Heart right ventricle (tissue), 16 donors: ENCODE measurements at regions of chr1 and their contacts with region 1.

Region 1: DNA sequence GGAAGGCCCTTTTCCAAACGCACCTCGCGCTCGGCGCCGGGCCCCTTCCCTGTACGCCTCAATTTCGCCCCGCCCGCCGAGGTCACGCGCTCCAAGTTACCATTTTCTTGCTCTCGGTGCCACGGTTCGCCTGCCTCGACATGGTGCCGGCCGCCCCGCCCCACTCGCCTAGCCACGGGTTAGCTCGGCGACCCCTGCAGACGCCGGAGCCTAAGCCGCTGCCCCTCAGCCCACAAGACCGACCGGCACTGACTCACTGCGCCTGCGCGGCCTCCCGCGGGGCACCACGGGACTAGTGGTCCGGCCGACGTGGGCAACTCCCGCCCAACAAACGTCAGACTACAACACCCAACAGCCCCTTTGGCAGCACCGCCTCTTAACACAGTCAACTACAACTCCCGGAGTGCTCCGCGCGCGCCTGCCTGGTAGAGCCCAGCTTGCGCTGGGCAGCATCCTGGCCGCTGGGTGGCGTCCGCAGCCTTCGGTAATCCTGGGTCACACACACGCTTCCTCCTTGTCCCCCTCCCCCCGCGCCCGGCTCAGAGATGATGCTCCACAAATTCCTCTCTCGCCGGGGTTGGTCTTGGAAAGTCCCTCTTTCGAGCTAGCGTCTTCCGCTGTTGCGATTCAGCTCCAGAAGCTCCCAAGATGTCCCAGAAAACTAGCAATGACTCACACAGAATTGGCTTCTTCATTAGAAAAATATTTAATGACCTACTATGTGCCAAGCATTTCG is at the start of gene TRAPPC3:
- DNase-seq: peak; percentile 100
- ATAC-seq: peak; percentile 92 to 97 (median 94)
- H3K4me3 ChIP-seq: peak within 1 kb of the TSS; percentile 59 to 87 (median 78)
- H3K27ac ChIP-seq: peak within 1 kb of the TSS; percentile 84 to 100 (median 94)
- H3K4me1 ChIP-seq: peaks cover 18 to 63% (median 50%) of the 10 kb centered on the region in 9 donors
- H3K27me3 ChIP-seq: no peaks in the 10 kb centered on the region
- CTCF ChIP-seq: peak; percentile 84 to 100 (median 97)
- total RNA-seq, gene TRAPPC3: 41.6 to 62.6 (median 48.4) TPM

Region 2: DNA sequence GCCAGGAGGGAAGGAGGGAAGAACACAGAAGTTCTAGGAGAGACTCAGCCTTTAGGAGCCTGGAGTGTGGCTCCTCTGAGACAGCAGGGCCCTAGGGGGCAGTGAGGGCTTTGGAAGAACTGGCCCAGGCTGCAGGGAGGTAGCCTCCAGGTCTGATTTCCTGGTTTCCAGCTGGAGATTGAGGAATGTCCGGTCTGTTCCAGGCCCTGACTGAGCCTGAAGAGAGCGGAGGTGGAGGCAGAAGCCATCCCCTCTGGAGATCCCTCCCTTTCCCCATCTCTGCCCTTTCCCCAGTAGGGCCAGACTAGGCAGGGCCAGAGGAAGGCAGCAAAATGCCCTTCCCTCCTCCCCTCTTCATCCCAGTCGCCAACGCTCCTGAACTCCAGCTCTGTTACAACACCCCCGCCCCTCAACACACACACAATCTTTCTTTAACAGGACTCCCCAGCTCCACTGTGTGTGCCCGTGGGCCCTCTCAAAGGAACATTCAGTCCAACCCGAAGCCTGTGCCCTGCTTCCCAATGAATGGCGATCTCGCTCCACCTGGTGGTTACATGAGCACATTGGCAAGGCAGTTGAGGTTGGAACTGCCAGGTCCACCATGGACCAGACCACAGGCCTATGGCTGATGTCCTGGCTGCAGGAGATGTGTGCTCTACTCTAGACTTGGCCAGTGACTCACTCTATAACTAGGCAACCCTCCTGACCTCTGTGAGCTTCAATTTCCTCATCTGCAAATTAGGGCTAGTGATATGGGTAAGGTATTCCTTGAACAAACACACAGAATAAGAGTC is 38.6 kb after region 1 on chr1:
- intact Hi-C with region 1: loop called (anchors 1 to 5 kb)
- DNase-seq: peak; percentile 76 to 90
- ATAC-seq: peak; percentile 91 to 97 (median 96)
- H3K4me3 ChIP-seq: peak overlapping the region in 2 of 10 donors; percentile 9 to 19
- H3K27ac ChIP-seq: peak overlapping the region; percentile 68 to 93 (median 83)
- H3K4me1 ChIP-seq: peaks cover 0 to 24% (median 10%) of the 10 kb centered on the region in 9 donors
- H3K27me3 ChIP-seq: no peaks in the 10 kb centered on the region
- CTCF ChIP-seq: peak; percentile 67 to 94 (median 86)

Region 3: DNA sequence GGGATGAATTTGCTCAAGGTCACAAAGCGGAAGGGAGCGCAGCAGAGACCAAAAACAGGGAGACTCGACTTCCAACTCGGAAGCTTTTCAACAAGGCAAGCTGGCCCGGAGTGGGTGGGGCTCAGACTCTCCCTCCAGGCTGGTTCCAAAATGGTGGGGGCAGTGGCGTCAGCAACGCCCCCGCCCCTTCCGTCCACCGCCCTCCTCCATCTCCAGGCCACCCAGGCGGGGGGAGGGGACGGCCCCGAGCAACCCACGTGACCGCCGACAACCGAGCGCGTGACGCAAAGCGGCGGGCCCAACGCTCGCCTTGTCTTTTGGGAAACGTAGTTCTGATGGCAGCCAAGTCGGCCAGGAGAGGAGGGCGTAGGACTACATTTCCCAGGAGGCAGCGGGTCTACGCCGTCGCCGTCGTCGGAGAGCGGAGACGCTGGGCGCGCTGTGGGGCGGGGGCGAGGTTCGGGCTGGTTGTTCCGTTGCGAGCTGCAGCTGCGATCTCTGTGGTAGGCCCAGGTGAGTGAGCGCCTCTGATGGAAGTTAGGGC is 74.7 kb after region 1 on chr1 and contains the start of gene THRAP3:
- intact Hi-C with region 1: loop called in 6 of 10 experiments (anchors 1 to 5 kb)
- DNase-seq: peak; percentile 99
- ATAC-seq: peak; percentile 96 to 98 (median 97)
- H3K4me3 ChIP-seq: peak within 1 kb of the TSS; percentile 63 to 88 (median 79)
- H3K27ac ChIP-seq: peak within 1 kb of the TSS; percentile 93 to 99 (median 96)
- H3K4me1 ChIP-seq: peaks cover 3 to 53% (median 45%) of the 10 kb centered on the region in 9 donors
- H3K27me3 ChIP-seq: no peaks in the 10 kb centered on the region
- CTCF ChIP-seq: no peak
- total RNA-seq, gene THRAP3: 85.3 to 109 (median 100) TPM

Region 4: DNA sequence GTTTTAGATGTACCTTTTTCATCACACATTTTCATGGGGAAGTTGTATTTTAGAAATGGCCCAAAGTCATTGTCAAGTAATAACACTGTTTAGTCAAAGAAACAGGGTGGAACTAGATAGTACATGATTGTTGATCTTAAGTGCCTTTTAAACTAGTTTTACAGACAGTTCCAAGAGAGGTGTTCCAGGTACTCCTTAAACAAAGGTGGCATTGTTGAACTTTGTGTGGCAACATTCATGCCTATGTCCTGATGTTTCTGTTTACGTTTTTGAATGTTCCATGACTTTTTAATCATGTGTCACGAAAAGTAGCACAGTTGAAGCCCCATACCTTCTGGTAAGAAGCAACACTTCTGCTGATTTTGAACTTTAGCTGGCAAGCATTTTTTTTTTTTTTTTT is 147.7 kb after region 1 on chr1:
- intact Hi-C with region 1: loop called in 2 of 10 experiments (anchors 5 to 10 kb)
- DNase-seq: no peak
- ATAC-seq: no peak
- H3K4me3 ChIP-seq: no peak overlapping the region
- H3K27ac ChIP-seq: no peak overlapping the region
- H3K4me1 ChIP-seq: peaks cover 0 to 24% (median 11%) of the 10 kb centered on the region in 9 donors
- H3K27me3 ChIP-seq: no peaks in the 10 kb centered on the region
- CTCF ChIP-seq: no peak

Region 5: GRCh38 chr1:36385410-36386257 is 236.2 kb after region 1 on chr1 and contains the start of gene STK40:
- intact Hi-C with region 1: loop called in 2 of 10 experiments (anchors 5 to 10 kb)
- DNase-seq: peak; percentile 98 to 99
- ATAC-seq: peak; percentile 88 to 97 (median 94)
- H3K4me3 ChIP-seq: peak within 1 kb of the TSS; percentile 83 to 100 (median 95)
- H3K27ac ChIP-seq: peak within 1 kb of the TSS; percentile 78 to 99 (median 96)
- H3K4me1 ChIP-seq: peaks cover 11 to 84% (median 73%) of the 10 kb centered on the region in 9 donors
- H3K27me3 ChIP-seq: no peaks in the 10 kb centered on the region
- CTCF ChIP-seq: peak in 1 of 9 donors; percentile 13
- total RNA-seq, gene STK40: 45.2 to 81.6 (median 60.8) TPM

Region 6: GRCh38 chr1:36420836-36421664 is 271.6 kb after region 1 on chr1:
- intact Hi-C with region 1: loop called in 2 of 10 experiments (anchors 1 to 10 kb)
- DNase-seq: peak; percentile 90 to 91
- ATAC-seq: peak; percentile 89 to 98 (median 94)
- H3K4me3 ChIP-seq: no peak overlapping the region
- H3K27ac ChIP-seq: peak overlapping the region in 2 of 10 donors; percentile 8 to 60
- H3K4me1 ChIP-seq: peaks cover 4 to 18% (median 13%) of the 10 kb centered on the region in 9 donors
- H3K27me3 ChIP-seq: no peaks in the 10 kb centered on the region
- CTCF ChIP-seq: peak; percentile 90 to 97 (median 95)